ENCODE measurements at regions of chr4 and their contacts with region 1.

Region 1: DNA sequence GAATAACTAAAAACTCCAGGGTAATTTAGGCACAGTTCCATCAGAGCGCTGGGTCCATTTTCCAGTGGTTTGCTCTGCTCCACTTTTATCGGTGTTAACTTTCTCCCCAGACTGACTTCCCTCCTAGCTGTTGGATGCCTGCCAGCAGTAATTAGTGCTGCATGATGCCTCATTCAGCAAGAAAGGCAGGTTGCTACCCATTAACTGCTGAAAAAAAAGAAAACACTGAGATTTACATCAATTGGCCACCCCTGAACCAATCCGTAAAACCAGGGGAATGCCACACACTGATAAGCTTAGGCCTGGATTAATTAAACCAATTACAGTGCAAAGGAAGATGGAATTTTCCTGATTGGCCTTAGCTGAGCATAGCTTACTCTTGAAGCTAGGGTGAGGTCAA is 182.4 kb upstream of the CXXC4 start:
- DNase-seq: no peak
- H3K4me3 ChIP-seq: no peak overlapping the region
- H3K27ac ChIP-seq: no peak overlapping the region
- H3K4me1 ChIP-seq: no peaks in the 10 kb centered on the region
- H3K27me3 ChIP-seq: no peaks in the 10 kb centered on the region
- CTCF ChIP-seq: no peak

Region 2: GRCh38 chr4:103895942-103896360 is 781.2 kb before region 1 on chr4:
- CTCF ChIA-PET with region 1: no interaction called
- POLR2A ChIA-PET with region 1: interaction called, 10 read pairs
- intact Hi-C with region 1: no loop called
- DNase-seq: no peak
- H3K4me3 ChIP-seq: no peak overlapping the region
- H3K27ac ChIP-seq: no peak overlapping the region
- H3K4me1 ChIP-seq: no peaks in the 10 kb centered on the region
- H3K27me3 ChIP-seq: no peaks in the 10 kb centered on the region
- CTCF ChIP-seq: no peak